SK-N-SH (cell line): ENCODE measurements at regions of chr1 and their contacts with region 1.

Region 1: DNA sequence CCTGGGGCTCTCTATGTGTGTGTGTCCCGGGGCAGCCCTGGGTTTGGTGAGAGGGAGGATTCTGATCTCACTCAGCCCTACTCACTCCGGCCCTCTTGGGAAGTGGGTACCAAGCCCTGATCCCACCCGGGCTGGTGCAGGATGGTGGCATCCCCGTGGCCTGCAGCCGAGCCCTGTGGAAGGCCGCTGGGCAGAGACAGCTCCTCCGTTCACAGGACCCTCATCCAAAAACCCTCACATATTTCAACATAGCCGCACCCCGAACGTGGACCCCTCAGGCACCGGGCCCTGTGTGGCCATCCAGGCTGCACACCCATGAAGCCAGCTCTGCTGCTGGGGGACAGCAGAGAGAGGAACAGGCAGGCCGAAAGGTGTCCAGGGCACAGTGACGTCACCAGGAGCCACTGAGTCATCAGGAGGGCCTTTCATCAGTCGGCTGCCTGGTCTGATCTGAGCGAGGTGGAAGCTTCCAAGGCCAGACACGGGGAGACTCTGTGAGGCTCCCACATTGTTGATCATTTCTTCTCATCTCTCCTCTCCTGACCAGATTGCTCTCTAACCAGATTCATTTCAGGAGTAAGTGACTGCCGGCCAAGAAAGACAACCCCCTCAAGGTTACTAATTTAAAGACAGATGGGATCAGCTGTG is 16.2 kb upstream of the GPR157 start:
- DNase-seq: no peak
- H3K4me3 ChIP-seq: no peak overlapping the region
- H3K27ac ChIP-seq: no peak overlapping the region
- H3K4me1 ChIP-seq: no peaks in the 10 kb centered on the region
- H3K27me3 ChIP-seq: no peaks in the 10 kb centered on the region
- CTCF ChIP-seq: no peak
- EP300 ChIP-seq: no peak
- RAD21 ChIP-seq: no peak

Region 2: DNA sequence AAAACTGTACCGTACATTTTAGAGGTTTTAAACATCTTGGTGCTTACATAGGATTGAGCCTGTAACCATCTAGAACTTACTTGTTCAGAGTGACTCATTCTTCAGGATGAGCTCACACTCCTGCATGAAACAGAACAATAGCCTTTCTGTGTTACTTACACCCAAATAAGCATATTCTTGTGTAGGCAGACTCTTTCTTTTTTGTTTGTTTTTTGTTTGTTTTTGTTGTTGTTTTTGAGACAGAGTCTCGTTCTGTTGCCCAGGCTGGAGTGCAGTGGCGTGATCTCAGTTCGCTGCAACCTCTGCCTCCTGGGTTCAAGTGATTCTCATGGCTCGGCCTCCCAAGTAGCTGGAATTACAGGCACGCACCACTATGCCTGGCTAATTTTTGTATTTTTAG is 203.2 kb before region 1 on chr1:
- CTCF ChIA-PET with region 1: no interaction called
- POLR2A ChIA-PET with region 1: no interaction called
- DNase-seq: no peak
- H3K4me3 ChIP-seq: no peak overlapping the region
- H3K27ac ChIP-seq: peak overlapping the region in 1 of 2 experiments; percentile 70; a peak in 2 of 4 replicates
- H3K4me1 ChIP-seq: no peaks in the 10 kb centered on the region; a peak in 1 of 4 replicates
- H3K27me3 ChIP-seq: no peaks in the 10 kb centered on the region
- CTCF ChIP-seq: no peak
- EP300 ChIP-seq: no peak
- RAD21 ChIP-seq: no peak

Region 3: GRCh38 chr1:9128520-9129265 is 16.5 kb before region 1 on chr1 and contains the start of gene GPR157:
- CTCF ChIA-PET with region 1: interaction called, 13 read pairs
- POLR2A ChIA-PET with region 1: no interaction called
- DNase-seq: no peak
- H3K4me3 ChIP-seq: peak within 1 kb of the TSS; percentile 57 to 59
- H3K27ac ChIP-seq: peak within 1 kb of the TSS in 1 of 2 experiments; percentile 5; a peak in 1 of 4 replicates
- H3K4me1 ChIP-seq: peaks cover 0 to 16% of the 10 kb centered on the region in 2 experiments; a peak in 1 of 4 replicates
- H3K27me3 ChIP-seq: no peaks in the 10 kb centered on the region
- CTCF ChIP-seq: no peak
- EP300 ChIP-seq: no peak
- RAD21 ChIP-seq: no peak
- polyA plus RNA-seq, gene GPR157: 1.8 and 2.1 TPM in 2 replicates

Region 4: DNA sequence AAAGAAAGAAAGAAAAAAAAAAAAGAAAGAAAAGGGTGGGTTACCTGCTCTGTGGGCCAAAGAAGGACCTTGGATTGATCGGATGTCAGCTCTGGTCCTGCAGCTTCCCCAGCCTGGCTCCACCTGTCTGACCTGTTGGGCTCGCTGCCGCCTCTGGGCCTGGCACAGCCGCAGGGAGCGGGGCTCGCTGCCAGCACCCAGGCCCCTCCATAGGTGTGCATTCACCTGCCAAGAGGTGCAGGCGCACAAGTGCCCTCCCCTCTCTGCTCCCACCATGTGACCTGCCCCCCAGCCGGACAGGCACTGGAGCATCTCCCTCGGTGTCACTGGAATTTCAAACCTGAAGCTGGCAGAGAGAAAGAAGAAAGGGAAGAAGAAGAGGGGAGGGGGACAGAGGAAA is 16.8 kb after region 1 on chr1:
- CTCF ChIA-PET with region 1: interaction called, 13 read pairs
- POLR2A ChIA-PET with region 1: interaction called, 3 read pairs
- DNase-seq: no peak
- H3K4me3 ChIP-seq: no peak overlapping the region
- H3K27ac ChIP-seq: no peak overlapping the region; a peak in 1 of 4 replicates
- H3K4me1 ChIP-seq: peaks cover 2 to 16% of the 10 kb centered on the region in 2 experiments; a peak in 3 of 4 replicates
- H3K27me3 ChIP-seq: no peaks in the 10 kb centered on the region
- CTCF ChIP-seq: no peak
- EP300 ChIP-seq: no peak
- RAD21 ChIP-seq: no peak

Region 5: DNA sequence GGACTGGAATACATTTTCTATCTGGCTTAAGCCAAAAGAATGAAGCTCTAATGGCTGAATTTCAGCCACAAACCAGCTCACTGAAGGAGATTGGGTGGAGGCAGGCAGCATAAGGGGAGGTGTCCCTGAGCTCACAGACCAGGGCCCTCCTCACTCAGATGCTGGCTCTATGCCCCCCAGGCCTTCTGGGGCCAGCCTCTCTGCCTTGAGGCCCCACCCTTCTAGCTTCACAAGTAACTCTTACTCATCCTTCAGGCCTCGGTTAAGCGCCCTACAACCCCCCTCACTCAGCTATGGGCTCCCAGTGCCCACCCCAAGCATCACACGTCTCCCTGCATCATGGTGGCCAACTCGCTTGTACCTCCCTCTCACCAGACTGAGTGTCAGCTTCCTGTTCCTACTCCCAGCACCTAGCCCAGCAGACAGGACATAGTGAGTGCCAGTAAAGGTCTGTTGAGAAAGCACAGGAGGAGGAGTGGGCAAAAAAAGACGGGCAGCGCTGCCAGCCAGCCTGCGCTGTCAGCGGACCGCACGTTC is 24.5 kb after region 1 on chr1:
- CTCF ChIA-PET with region 1: interaction called, 18 read pairs
- POLR2A ChIA-PET with region 1: interaction called, 3 read pairs
- DNase-seq: no peak
- H3K4me3 ChIP-seq: no peak overlapping the region
- H3K27ac ChIP-seq: no peak overlapping the region
- H3K4me1 ChIP-seq: peaks cover 1 to 2% of the 10 kb centered on the region in 2 experiments; a peak in 2 of 4 replicates
- H3K27me3 ChIP-seq: no peaks in the 10 kb centered on the region
- CTCF ChIP-seq: no peak
- EP300 ChIP-seq: no peak
- RAD21 ChIP-seq: no peak

Region 6: GRCh38 chr1:9267352-9267686 is 122.2 kb after region 1 on chr1:
- CTCF ChIA-PET with region 1: no interaction called
- POLR2A ChIA-PET with region 1: no interaction called
- DNase-seq: no peak
- H3K4me3 ChIP-seq: no peak overlapping the region; a peak in 1 of 4 replicates
- H3K27ac ChIP-seq: no peak overlapping the region
- H3K4me1 ChIP-seq: peaks cover 0 to 3% of the 10 kb centered on the region in 2 experiments; a peak in 1 of 4 replicates
- H3K27me3 ChIP-seq: no peaks in the 10 kb centered on the region
- CTCF ChIP-seq: no peak; the same call in none of the 2 replicates
- EP300 ChIP-seq: no peak
- RAD21 ChIP-seq: no peak